Thyroid gland (tissue), 4 donors: ENCODE measurements at regions of chr3 and their contacts with region 1.

Region 1: GRCh38 chr3:59857589-59858346 is 807.9 kb upstream of the CFAP20DC start:
- DNase-seq: peak; percentile 80 to 84
- H3K4me3 ChIP-seq: no peak overlapping the region
- H3K27ac ChIP-seq: no peak overlapping the region
- H3K4me1 ChIP-seq: no peaks in the 10 kb centered on the region
- H3K27me3 ChIP-seq: no peaks in the 10 kb centered on the region
- CTCF ChIP-seq: peak; percentile 73 to 97 (median 90)
- POLR2A ChIP-seq: no peak

Region 2: GRCh38 chr3:58640700-58641372 is 1216.9 kb before region 1 on chr3:
- intact Hi-C with region 1: loop called (anchors 10 kb)
- DNase-seq: peak; percentile 90 to 91
- H3K4me3 ChIP-seq: no peak overlapping the region
- H3K27ac ChIP-seq: no peak overlapping the region
- H3K4me1 ChIP-seq: peaks cover 0 to 9% of the 10 kb centered on the region in 2 donors
- H3K27me3 ChIP-seq: no peaks in the 10 kb centered on the region
- CTCF ChIP-seq: peak; percentile 74 to 97 (median 92)
- POLR2A ChIP-seq: no peak

Region 3: DNA sequence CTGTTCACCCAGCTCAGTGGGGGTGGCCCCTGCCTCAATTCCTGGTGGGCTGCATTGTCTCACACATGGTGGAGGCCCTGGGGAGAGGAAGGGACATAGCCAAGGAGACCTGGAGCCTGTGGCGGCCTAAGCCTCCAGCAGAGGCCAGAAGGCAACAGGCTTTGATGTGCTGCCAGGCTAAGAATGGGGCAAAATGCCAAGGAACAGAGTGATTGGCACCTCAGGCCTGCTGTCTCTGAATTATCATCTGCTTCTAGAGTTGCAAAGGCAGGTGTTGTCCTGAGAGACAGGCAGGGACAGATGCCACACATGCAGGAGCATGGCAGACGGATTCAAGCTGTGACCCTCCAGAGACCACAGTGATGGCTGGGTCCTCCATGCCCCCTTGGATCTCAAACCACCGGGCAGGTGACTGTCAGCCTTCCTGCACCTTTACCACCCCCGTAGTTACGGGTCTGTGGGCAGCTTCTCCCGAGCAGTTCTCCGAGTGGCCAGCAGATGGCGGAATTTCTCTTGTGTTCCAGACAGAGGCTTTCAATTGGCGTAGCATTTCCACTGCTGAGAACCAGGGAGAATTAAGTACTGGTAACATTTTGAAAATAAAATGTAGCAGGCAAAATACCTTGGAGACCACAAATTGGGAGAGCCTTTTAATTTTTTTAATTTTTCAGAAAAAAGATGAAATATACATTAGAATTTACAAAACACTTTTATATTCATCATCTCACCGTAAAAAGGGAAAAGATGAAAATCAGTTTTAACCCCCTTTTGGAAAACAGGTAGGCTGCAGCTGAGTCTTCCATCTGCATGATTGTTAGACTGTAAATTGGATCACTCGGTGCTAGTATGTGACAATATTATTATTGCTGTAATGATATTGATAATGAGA is 282.4 kb before region 1 on chr3:
- intact Hi-C with region 1: loop called (anchors 5 kb)
- DNase-seq: peak; percentile 85 to 86
- H3K4me3 ChIP-seq: no peak overlapping the region
- H3K27ac ChIP-seq: no peak overlapping the region
- H3K4me1 ChIP-seq: no peaks in the 10 kb centered on the region
- H3K27me3 ChIP-seq: no peaks in the 10 kb centered on the region
- CTCF ChIP-seq: peak; percentile 78 to 97 (median 89)
- POLR2A ChIP-seq: no peak